Naive thymus-derived CD4-positive, alpha-beta T cell (primary cell): ENCODE measurements at regions of chr16 and their contacts with region 1.

Region 1: GRCh38 chr16:63096857-63097256 is 1060.6 kb upstream of the CDH8 start:
- DNase-seq: no peak
- ATAC-seq: no peak
- H3K4me3 ChIP-seq: no peak overlapping the region
- H3K4me3 Mint-ChIP-seq: no peak overlapping the region
- H3K27ac ChIP-seq: no peak overlapping the region
- H3K27ac Mint-ChIP-seq: no peak overlapping the region
- H3K4me1 ChIP-seq: no peaks in the 10 kb centered on the region
- H3K4me1 Mint-ChIP-seq: no peaks in the 10 kb centered on the region
- H3K27me3 ChIP-seq: no peaks in the 10 kb centered on the region
- H3K27me3 Mint-ChIP-seq: no peaks in the 10 kb centered on the region

Region 2: GRCh38 chr16:62814891-62815290 is 282.0 kb before region 1 on chr16:
- CTCF ChIA-PET with region 1: no interaction called
- POLR2A ChIA-PET with region 1: no interaction called
- intact Hi-C with region 1: no loop called
- DNase-seq: no peak
- ATAC-seq: no peak
- H3K4me3 ChIP-seq: no peak overlapping the region
- H3K4me3 Mint-ChIP-seq: no peak overlapping the region
- H3K27ac ChIP-seq: no peak overlapping the region
- H3K27ac Mint-ChIP-seq: no peak overlapping the region
- H3K4me1 ChIP-seq: no peaks in the 10 kb centered on the region
- H3K4me1 Mint-ChIP-seq: no peaks in the 10 kb centered on the region
- H3K27me3 ChIP-seq: no peaks in the 10 kb centered on the region
- H3K27me3 Mint-ChIP-seq: no peaks in the 10 kb centered on the region

Region 3: DNA sequence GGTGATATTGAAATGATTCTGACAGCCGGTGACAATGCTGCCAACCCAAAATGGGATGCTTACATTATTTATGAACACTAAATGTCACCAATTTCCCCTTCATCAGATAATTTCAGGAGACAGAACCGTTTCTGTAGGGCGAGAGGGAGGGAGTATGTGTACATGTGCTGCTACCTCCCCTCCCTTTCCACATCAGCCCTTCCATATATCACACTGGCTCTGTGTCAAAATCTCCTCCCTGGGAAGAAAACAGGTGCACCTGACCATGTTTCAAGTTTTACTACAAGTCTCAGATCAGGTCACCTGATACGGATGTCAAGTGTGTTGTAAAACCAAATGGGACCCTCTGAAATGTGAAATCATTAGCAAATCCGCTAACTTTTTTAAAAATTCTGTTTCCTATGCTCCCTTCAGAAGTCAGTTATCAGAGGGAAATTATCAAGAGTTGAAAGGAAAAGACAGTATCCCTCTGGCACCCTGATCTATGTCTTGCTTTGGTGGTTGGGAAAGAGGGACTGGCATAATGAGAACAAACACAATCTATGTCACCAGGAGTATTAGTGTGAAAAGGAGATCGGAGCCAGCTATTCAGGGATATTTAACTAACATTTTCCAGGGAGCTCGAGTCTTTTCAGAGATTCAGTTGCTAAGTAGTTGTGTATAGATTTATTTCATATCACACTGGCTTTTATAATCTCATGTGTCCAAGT is 58.3 kb before region 1 on chr16:
- CTCF ChIA-PET with region 1: no interaction called
- POLR2A ChIA-PET with region 1: no interaction called
- intact Hi-C with region 1: loop called in 1 of 2 experiments (anchors 10 kb)
- DNase-seq: no peak
- ATAC-seq: no peak
- H3K4me3 ChIP-seq: no peak overlapping the region
- H3K4me3 Mint-ChIP-seq: no peak overlapping the region
- H3K27ac ChIP-seq: no peak overlapping the region
- H3K27ac Mint-ChIP-seq: no peak overlapping the region
- H3K4me1 ChIP-seq: no peaks in the 10 kb centered on the region
- H3K4me1 Mint-ChIP-seq: no peaks in the 10 kb centered on the region
- H3K27me3 ChIP-seq: no peaks in the 10 kb centered on the region
- H3K27me3 Mint-ChIP-seq: no peaks in the 10 kb centered on the region